GM23248 (cell line): ENCODE measurements at regions of chr11 and their contacts with region 1.

Region 1: GRCh38 chr11:125345421-125346178 is 150.5 kb downstream of the FEZ1 start:
- DNase-seq: peak; percentile 93
- H3K4me3 ChIP-seq: no peak overlapping the region
- H3K27ac ChIP-seq: no peak overlapping the region
- H3K4me1 ChIP-seq: no peaks in the 10 kb centered on the region
- H3K27me3 ChIP-seq: no peaks in the 10 kb centered on the region

Region 2: DNA sequence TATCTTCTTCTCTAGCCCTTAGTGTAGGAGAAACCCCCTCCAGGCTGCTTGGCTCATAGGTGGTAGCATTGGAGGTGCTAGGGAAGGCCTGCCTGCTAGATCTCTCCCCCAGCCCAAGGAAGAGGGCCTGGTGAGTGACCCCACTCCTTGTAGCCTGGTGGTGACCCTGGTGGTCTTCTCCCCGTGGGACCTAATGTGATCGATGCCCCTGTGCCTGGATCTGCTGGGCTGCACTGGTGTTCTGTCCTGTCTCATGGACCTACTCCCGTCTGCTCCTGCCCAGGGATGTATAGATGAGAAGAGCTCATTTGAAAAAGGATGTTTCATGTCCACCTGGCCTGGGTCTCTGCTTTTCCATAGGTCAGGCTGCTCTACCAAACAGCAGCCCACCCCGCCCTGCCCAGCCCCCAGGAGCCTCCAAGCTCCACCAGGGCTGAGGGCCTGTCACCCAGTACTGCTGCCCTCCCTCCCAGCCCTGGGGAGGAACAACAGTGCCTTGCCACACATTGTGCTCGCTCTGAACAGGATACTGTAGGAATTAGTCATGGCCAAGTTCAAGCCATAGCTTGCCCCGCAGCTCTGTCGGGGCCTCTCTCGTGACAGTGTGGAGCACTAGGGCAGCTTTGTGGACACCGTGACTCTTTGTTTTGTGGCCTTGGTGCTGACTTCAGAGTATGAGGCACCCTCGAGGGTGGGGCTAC is 262.8 kb before region 1 on chr11:
- in situ Hi-C with region 1: loop called (anchors 10 kb)
- DNase-seq: peak; percentile 94
- H3K4me3 ChIP-seq: no peak overlapping the region
- H3K27ac ChIP-seq: peak overlapping the region; percentile 72
- H3K4me1 ChIP-seq: peaks cover 13% of the 10 kb centered on the region
- H3K27me3 ChIP-seq: no peaks in the 10 kb centered on the region

Region 3: DNA sequence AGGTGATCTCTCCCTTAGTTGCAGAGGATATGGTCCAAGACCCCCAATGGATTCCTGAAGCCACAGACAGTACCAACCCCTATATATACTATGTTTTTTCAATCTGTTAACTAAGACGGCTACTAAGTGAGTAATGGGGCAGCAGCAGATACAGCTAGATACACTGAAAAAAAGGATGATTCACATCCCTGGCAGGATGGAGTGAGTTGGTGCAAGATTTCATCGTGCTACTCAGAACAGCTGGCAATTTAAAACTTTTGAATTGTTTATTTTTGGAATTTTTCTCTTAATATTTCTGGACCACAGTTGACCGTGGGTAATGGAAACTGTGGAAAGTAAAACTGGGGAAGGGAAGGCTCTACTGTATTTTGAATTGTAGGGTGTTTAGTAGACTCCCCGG is 217.2 kb before region 1 on chr11:
- in situ Hi-C with region 1: no loop called
- DNase-seq: peak; percentile 82
- H3K4me3 ChIP-seq: no peak overlapping the region
- H3K27ac ChIP-seq: no peak overlapping the region
- H3K4me1 ChIP-seq: peaks cover 4% of the 10 kb centered on the region; the same call in 1 of the 2 replicates
- H3K27me3 ChIP-seq: 0 out of 2 replicates have a peak, but pooled peaks cover 1% of the 10 kb centered on the region

Region 4: DNA sequence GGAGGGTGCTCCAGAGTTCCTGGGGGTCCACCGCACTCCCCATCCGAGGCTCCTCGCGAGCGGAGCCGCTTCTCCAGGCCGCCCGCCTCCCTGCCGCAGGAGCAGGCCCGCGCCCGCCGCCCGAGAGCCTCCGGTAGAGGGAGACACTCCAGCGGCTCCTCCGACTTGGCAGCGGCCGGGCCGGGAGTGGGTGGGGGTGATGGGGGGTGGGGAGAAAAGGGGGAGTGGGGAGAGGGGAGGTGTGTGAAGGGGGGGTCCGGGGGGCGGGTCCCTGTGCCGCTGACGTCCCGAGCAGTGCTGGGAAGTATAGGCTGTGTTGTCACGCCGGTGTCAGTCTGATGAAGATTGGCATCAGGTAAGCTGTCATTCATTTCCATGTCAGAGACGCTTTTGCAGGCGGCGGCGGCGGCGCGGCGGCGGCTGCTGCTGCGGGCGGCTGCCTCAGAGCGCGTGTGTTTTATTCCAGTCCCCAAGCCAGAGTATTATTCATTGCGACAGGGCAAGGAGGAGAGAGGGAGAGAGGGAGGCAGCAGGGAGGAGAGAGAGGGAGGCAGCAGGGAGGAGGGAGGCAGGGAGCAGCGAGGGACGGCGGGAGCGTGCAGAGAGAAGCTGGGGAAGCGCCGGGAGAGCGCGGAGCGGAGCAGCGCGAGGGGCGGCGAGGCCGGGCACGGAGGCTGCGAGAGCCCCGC is 181.0 kb before region 1 on chr11 and contains the start of gene PKNOX2:
- in situ Hi-C with region 1: loop called (anchors 5 kb)
- DNase-seq: peak; percentile 87
- H3K4me3 ChIP-seq: peak within 1 kb of the TSS; percentile 74
- H3K27ac ChIP-seq: 0 out of 2 replicates have a peak within 1 kb of the TSS, but pooled peaks have one; percentile 3
- H3K4me1 ChIP-seq: no peaks in the 10 kb centered on the region
- H3K27me3 ChIP-seq: peaks cover 3% of the 10 kb centered on the region; the same call in 1 of the 2 replicates
- total RNA-seq, gene PKNOX2: 0.51 and 0.76 TPM in 2 replicates